ENCODE measurements at regions of chr19 and their contacts with region 1.

Region 1: GRCh38 chr19:46990991-46991676 is 28.5 kb upstream of the NPAS1 start:
- DNase-seq: peak; percentile 77 to 85
- ATAC-seq: peak; percentile 70 to 87
- H3K4me3 ChIP-seq: no peak overlapping the region
- H3K27ac ChIP-seq: peak overlapping the region; percentile 31 to 65; a peak in 3 of 6 replicates
- H3K4me1 ChIP-seq: peaks cover 9% of the 10 kb centered on the region; the same call in 2 of the 3 replicates
- CTCF ChIP-seq: peak; percentile 97
- EP300 ChIP-seq: no peak
- POLR2A ChIP-seq: no peak
- RAD21 ChIP-seq: peak; percentile 99

Region 2: GRCh38 chr19:46746281-46747013 is 244.7 kb before region 1 on chr19 and contains the start of gene STRN4:
- CTCF ChIA-PET with region 1: interaction called, 14 read pairs
- POLR2A ChIA-PET with region 1: no interaction called
- DNase-seq: peak in 1 of 2 experiments; percentile 94
- ATAC-seq: peak; percentile 37 to 63
- H3K4me3 ChIP-seq: peak within 1 kb of the TSS; percentile 98
- H3K27ac ChIP-seq: peak within 1 kb of the TSS; percentile 99 to 100
- H3K4me1 ChIP-seq: peaks cover 17% of the 10 kb centered on the region
- CTCF ChIP-seq: no peak
- EP300 ChIP-seq: no peak
- POLR2A ChIP-seq: peak; percentile 51
- RAD21 ChIP-seq: no peak
- polyA plus RNA-seq, gene STRN4: 62.8 and 66.2 TPM in 2 replicates

Region 3: DNA sequence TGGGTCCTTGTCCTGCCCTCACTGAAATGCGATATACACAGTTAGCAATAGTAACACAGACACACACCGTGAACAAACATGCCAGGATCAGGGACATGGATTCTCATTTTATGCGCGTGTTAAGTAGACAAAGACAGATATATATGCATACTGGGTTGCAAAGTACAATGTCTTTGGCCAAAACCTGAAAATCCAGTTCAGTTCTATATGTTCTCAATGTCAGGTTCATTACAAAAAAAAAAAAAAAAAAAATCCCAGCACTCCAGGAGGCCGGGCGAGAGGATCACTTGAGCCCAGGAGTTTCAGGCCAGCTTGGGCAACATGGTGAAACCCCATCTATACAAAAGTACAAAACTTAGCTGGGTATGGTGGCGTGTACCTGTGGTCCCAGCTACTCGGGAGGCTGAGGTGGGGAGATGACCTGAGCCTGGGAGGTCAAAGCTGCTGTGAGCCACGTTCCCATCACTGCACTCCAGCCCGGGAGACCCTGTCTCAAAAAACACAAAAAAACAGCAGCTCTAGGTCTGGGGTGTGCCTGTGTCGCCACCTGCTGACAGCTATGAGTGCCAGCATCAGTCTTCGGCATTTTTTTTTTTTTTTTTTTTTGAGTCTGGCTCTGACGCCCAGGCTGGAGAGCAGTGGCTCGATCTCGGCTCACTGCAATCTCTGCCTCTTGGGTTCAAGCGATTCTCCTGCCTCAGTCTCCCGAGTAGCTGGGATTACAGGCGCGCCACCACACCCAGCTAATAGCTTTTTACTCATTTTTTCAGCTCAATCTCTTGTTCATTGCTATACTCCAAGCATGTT is 150.8 kb before region 1 on chr19:
- CTCF ChIA-PET with region 1: interaction called, 72 read pairs
- POLR2A ChIA-PET with region 1: no interaction called
- DNase-seq: peak in 1 of 2 experiments; percentile 77
- ATAC-seq: peak; percentile 61 to 77; a peak in 5 of 6 replicates
- H3K4me3 ChIP-seq: no peak overlapping the region
- H3K27ac ChIP-seq: peak overlapping the region in 1 of 2 experiments; percentile 20; a peak in 2 of 6 replicates
- H3K4me1 ChIP-seq: peaks cover 18% of the 10 kb centered on the region; the same call in 2 of the 3 replicates
- CTCF ChIP-seq: peak; percentile 96
- EP300 ChIP-seq: no peak
- POLR2A ChIP-seq: no peak
- RAD21 ChIP-seq: peak; percentile 95

Region 4: DNA sequence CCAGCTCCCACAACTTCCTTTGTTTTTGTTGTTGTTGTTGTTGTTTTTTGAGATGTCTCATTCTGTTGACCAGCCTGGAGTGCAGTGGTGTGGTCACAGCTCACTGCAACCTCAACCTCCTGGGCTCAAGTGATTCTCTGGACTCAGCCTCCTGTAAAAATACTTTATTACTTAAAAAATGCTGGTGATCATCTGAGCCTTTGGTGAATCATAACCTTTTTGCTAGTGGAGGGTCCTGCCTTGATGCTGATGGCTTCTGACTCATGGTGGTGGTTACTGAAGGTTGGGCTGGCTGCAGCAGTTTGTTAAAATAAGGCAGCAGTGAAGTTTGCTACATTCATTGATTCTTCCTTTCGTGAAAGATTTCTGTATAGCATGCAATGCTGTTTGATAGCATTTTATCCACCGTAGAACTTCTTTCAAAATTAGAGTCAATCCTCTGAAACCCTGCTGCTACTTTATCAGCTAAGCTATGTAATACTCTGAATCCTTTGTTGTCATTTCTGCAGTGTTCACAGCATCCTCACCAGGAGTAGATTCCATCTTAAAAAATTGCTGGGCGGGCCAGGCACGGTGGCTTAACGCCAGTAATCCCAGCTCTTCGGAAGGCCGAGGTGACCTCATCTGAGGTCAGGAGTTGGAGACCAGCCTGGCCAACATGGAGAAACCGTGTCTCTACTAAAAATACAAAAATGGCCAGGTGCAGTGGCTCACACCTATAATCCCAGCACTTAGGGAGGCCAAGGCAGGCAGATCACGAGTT is 112.3 kb before region 1 on chr19:
- CTCF ChIA-PET with region 1: interaction called, 47 read pairs
- POLR2A ChIA-PET with region 1: no interaction called
- DNase-seq: no peak
- ATAC-seq: peak; percentile 81 to 90
- H3K4me3 ChIP-seq: no peak overlapping the region
- H3K27ac ChIP-seq: peak overlapping the region; percentile 3 to 79; a peak in 4 of 6 replicates
- H3K4me1 ChIP-seq: peaks cover 65% of the 10 kb centered on the region
- CTCF ChIP-seq: no peak
- EP300 ChIP-seq: no peak
- POLR2A ChIP-seq: no peak
- RAD21 ChIP-seq: no peak

Region 5: DNA sequence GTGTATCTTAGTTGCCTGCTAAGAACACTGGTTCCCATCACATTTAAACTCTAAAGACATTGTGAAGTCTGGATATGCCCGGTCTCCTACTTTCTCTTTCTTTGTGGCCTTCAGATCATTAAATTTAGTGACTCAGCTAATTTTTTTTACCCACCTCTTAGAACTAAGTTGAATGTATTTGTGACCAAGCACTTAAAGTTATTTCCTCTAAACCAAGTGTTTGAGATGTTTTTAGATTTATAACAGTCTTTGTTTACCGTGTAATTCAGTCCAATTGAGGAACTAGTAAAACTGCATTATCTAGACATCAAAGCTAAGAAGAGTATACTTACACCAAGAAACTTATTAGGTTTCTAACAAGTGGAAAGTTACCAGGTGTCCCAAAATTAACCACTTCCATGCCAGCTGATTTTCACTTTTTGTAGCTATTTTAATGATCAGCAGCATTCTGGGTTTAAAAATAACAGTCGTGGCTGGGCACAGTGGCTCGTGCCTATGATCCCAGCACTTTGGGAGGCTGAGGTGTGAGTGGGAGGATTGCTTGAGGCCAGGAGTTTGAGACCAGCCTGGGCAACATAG is 77.2 kb before region 1 on chr19:
- CTCF ChIA-PET with region 1: interaction called, 52 read pairs
- POLR2A ChIA-PET with region 1: no interaction called
- DNase-seq: peak; percentile 38 to 50
- ATAC-seq: peak in 1 of 2 experiments; percentile 37; a peak in 3 of 6 replicates
- H3K4me3 ChIP-seq: peak overlapping the region; percentile 10; the same call in 2 of the 3 replicates
- H3K27ac ChIP-seq: peak overlapping the region; percentile 62 to 76
- H3K4me1 ChIP-seq: peaks cover 66% of the 10 kb centered on the region
- CTCF ChIP-seq: no peak
- EP300 ChIP-seq: no peak
- POLR2A ChIP-seq: no peak
- RAD21 ChIP-seq: no peak

Region 6: DNA sequence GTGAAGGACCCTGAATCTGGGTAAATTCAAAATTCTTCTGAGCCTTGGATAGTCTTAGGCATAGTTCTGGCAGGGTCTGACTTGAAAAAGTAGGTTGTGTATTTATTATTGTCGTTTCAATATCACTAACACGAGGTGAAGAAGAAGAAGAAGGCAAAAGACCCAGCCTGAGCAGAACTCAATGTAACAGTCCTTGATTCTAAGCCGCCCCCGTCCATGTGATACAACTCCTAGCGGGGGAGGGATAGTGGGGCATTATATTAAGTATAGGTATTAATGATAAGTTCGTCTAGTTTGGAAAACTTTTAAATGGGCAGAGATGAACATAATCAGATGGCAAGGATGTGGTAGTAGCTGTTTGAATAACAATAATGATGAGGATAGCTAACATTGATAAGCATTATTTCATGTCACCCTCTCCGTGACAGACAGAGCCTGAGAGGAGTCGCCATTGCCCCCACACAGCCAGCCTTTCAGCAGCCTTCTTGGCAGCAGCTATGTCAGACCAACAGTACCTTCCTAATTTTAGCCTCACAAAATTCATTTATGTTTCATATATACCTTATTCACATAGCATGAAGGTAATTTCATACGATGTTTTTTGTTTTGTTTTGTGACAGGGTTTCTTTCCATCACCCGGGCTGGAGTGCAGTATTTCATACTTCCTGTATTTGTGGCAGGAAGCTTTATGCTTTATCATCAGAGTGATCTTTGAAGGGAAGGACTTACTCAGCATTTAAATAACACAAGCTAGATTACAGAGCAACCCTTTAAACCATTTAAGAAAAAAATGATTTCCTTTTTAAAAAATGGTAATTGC is 35.9 kb before region 1 on chr19:
- CTCF ChIA-PET with region 1: interaction called, 62 read pairs
- POLR2A ChIA-PET with region 1: no interaction called
- DNase-seq: no peak
- ATAC-seq: no peak
- H3K4me3 ChIP-seq: no peak overlapping the region
- H3K27ac ChIP-seq: peak overlapping the region; percentile 2 to 49; a peak in 2 of 6 replicates
- H3K4me1 ChIP-seq: peaks cover 54% of the 10 kb centered on the region
- CTCF ChIP-seq: no peak
- EP300 ChIP-seq: no peak
- POLR2A ChIP-seq: no peak
- RAD21 ChIP-seq: no peak

Region 7: DNA sequence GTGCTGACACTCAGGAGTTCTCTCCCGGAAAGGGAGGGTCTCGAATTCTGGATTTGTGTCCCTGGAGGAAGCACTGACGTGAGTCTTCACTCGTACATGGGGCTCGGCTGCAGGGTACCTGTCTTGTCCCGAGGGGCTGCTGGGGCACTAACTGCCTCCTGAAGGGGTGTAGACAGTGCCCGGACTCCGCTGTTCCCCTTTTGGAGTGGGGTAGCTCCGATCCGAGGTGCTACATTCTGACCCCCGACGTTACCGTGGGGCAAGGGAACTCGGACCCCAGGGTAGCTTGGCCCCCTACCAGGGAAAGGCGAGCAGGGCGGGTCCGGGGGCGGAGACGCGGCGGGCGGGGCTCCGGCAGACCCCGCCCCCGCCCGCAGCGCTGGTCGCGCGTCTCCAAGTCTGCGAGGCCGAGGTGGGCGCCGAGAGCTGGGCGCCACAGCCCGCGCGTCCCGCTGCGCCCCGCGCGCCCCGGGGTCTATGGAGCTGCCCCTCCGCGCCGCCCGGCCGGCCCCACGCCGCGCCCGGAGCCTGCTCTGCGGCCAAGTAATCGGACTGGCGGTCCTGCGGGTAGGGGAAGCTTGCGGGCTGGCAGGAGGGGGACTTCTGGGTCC is 28.4 kb after region 1 on chr19 and contains the start of gene NPAS1:
- CTCF ChIA-PET with region 1: interaction called, 98 read pairs
- POLR2A ChIA-PET with region 1: no interaction called
- DNase-seq: no peak
- ATAC-seq: peak; percentile 35 to 42; a peak in 5 of 6 replicates
- H3K4me3 ChIP-seq: peak within 1 kb of the TSS; percentile 50
- H3K27ac ChIP-seq: peak within 1 kb of the TSS in 1 of 2 experiments; percentile 70; a peak in 3 of 6 replicates
- H3K4me1 ChIP-seq: peaks cover 31% of the 10 kb centered on the region
- CTCF ChIP-seq: no peak
- EP300 ChIP-seq: no peak
- POLR2A ChIP-seq: no peak
- RAD21 ChIP-seq: no peak
- polyA plus RNA-seq, gene NPAS1: 1.3 and 1.5 TPM in 2 replicates

Region 8: GRCh38 chr19:47066376-47067214 is 75.5 kb after region 1 on chr19:
- CTCF ChIA-PET with region 1: no interaction called
- POLR2A ChIA-PET with region 1: no interaction called
- DNase-seq: no peak
- ATAC-seq: no peak
- H3K4me3 ChIP-seq: no peak overlapping the region
- H3K27ac ChIP-seq: no peak overlapping the region
- H3K4me1 ChIP-seq: no peaks in the 10 kb centered on the region
- CTCF ChIP-seq: no peak
- EP300 ChIP-seq: no peak
- POLR2A ChIP-seq: no peak
- RAD21 ChIP-seq: no peak

Region 9: DNA sequence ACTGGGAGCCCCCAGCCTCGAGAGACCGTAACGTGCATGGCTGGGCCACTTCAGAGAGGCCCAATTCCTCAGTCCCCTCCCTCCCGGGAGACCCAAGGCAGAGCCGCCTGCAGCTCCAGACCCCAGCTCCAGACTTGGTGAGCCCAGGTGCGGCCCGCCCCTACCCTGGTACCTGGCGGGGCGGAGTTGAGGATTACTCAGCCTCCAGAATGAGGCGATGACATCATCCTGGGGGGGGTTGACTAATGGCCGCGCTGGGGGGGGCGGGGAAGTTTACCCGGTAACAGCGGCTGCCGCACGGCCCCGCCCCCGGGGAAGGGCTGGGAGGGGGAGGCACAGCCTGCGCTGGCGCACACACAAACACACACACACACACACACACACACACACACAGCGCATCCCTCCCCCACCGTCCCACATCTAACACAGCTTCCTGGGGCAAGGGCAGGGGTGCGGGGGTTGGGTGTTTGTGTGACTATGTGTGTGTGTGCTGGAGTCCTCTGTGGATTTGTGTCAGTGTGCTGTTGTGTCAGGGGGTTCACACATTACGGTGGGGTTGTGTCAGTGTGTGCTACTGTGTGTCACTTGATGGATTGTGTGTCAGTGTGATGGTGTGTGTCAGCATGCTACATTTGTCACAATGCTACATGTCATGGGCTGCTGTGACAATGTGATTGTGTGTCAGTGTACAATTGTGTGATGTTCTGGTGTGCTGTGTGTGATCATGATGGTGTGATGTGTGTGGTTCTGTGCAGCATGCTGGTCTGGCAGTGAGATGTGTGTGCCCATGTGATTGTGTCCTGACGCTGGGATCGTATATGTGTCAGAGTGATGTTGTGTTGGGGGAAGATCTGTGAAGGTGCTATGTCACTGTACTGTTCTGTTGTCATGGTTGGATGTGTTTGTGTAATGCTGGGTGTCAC is 250.1 kb after region 1 on chr19:
- CTCF ChIA-PET with region 1: no interaction called
- POLR2A ChIA-PET with region 1: no interaction called
- DNase-seq: peak; percentile 69 to 83
- ATAC-seq: peak; percentile 8 to 46; a peak in 5 of 6 replicates
- H3K4me3 ChIP-seq: peak overlapping the region; percentile 16; the same call in 2 of the 3 replicates
- H3K27ac ChIP-seq: peak overlapping the region; percentile 57 to 84
- H3K4me1 ChIP-seq: peaks cover 33% of the 10 kb centered on the region
- CTCF ChIP-seq: no peak
- EP300 ChIP-seq: no peak
- POLR2A ChIP-seq: no peak
- RAD21 ChIP-seq: no peak